Activated CD4-positive, alpha-beta memory T cell treated with anti-CD3 and anti-CD28 coated beads for 36 hours (primary cell): ENCODE measurements at regions of chr5 and their contacts with region 1.

Region 1: GRCh38 chr5:142713121-142713706 is 27.3 kb upstream of the FGF1 start:
- DNase-seq: peak; percentile 89
- H3K4me3 Mint-ChIP-seq: peak overlapping the region; percentile 67
- H3K27ac Mint-ChIP-seq: no peak overlapping the region
- H3K4me1 Mint-ChIP-seq: peaks cover 7% of the 10 kb centered on the region
- H3K27me3 Mint-ChIP-seq: peaks cover 2% of the 10 kb centered on the region

Region 2: GRCh38 chr5:142356716-142357473 is 356.3 kb before region 1 on chr5:
- CTCF ChIA-PET with region 1: no interaction called
- POLR2A ChIA-PET with region 1: no interaction called
- intact Hi-C with region 1: no loop called
- DNase-seq: peak; percentile 95
- H3K4me3 Mint-ChIP-seq: peak overlapping the region; percentile 71
- H3K27ac Mint-ChIP-seq: peak overlapping the region; percentile 91
- H3K4me1 Mint-ChIP-seq: peaks cover 38% of the 10 kb centered on the region
- H3K27me3 Mint-ChIP-seq: no peaks in the 10 kb centered on the region

Region 3: DNA sequence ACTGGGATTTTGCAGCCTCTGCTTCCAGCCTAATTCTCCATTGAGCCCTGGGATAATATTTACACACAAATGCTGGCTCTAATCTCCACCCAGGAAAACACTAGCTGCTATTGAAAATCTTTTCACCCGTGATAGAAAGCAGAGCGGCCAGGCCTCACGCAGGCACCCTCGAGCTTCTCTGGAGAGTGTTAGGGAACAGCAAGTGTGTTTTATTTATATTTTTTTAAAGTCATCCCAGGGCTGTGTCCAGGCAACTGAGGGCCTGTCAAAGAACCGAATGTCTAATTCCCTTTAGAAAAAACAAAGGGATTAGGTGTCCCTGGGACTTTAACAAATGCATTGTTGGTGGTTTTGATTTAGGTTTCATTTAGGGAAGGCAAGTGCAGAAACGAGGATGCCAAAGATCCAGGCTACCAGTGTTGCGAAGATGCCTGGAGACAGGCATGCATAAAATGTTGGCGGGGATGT is 337.2 kb before region 1 on chr5:
- CTCF ChIA-PET with region 1: no interaction called
- POLR2A ChIA-PET with region 1: no interaction called
- intact Hi-C with region 1: no loop called
- DNase-seq: no peak
- H3K4me3 Mint-ChIP-seq: no peak overlapping the region
- H3K27ac Mint-ChIP-seq: no peak overlapping the region
- H3K4me1 Mint-ChIP-seq: peaks cover 11% of the 10 kb centered on the region
- H3K27me3 Mint-ChIP-seq: no peaks in the 10 kb centered on the region

Region 4: GRCh38 chr5:142605611-142606010 is 107.6 kb before region 1 on chr5:
- CTCF ChIA-PET with region 1: interaction called, 13 read pairs
- POLR2A ChIA-PET with region 1: no interaction called
- intact Hi-C with region 1: loop called (anchors 5 kb)
- DNase-seq: no peak
- H3K4me3 Mint-ChIP-seq: no peak overlapping the region
- H3K27ac Mint-ChIP-seq: no peak overlapping the region
- H3K4me1 Mint-ChIP-seq: no peaks in the 10 kb centered on the region
- H3K27me3 Mint-ChIP-seq: peaks cover 10% of the 10 kb centered on the region

Region 5: GRCh38 chr5:142655339-142656267 is 57.6 kb before region 1 on chr5:
- CTCF ChIA-PET with region 1: interaction called, 28 read pairs
- POLR2A ChIA-PET with region 1: no interaction called
- intact Hi-C with region 1: no loop called
- DNase-seq: peak; percentile 82
- H3K4me3 Mint-ChIP-seq: no peak overlapping the region
- H3K27ac Mint-ChIP-seq: no peak overlapping the region
- H3K4me1 Mint-ChIP-seq: no peaks in the 10 kb centered on the region
- H3K27me3 Mint-ChIP-seq: peaks cover 6% of the 10 kb centered on the region

Region 6: DNA sequence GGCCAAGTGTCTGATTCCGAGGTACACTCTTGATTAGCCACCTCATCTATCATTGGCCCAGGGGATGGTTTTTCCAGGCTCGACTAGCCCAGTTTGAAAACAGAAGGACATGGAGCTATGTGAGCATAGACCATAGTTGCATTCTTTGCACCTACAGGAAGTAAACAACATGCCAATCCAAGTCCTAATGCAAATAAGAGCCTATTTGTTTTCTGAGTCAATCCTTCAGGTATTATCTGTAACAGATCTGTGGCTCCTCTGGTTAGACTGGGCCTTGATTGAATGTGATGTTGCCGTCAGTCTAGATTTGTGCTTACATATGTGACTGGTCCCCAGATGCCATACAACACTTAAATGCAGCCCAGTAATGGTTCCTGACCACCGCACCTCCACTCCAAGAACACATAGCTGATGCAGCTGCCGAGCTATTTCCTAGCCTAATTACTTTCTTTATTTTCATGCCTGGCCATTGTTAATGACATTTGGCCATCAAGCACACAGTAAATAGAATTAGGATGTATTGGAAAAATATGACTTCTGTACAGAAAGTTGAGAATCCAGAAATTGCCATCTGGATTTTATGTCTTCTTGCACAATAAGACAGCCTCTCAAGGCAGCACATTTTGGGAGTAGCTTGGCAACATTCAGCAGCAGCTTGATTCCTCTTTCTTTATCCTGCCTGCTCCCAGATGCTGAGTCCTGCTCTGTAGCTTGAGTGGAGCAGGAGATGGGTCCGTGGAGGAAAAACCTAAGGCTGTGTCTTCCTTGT is 27.4 kb after region 1 on chr5:
- CTCF ChIA-PET with region 1: interaction called, 16 read pairs
- POLR2A ChIA-PET with region 1: no interaction called
- intact Hi-C with region 1: no loop called
- DNase-seq: no peak
- H3K4me3 Mint-ChIP-seq: no peak overlapping the region
- H3K27ac Mint-ChIP-seq: no peak overlapping the region
- H3K4me1 Mint-ChIP-seq: peaks cover 7% of the 10 kb centered on the region
- H3K27me3 Mint-ChIP-seq: no peaks in the 10 kb centered on the region

Region 7: DNA sequence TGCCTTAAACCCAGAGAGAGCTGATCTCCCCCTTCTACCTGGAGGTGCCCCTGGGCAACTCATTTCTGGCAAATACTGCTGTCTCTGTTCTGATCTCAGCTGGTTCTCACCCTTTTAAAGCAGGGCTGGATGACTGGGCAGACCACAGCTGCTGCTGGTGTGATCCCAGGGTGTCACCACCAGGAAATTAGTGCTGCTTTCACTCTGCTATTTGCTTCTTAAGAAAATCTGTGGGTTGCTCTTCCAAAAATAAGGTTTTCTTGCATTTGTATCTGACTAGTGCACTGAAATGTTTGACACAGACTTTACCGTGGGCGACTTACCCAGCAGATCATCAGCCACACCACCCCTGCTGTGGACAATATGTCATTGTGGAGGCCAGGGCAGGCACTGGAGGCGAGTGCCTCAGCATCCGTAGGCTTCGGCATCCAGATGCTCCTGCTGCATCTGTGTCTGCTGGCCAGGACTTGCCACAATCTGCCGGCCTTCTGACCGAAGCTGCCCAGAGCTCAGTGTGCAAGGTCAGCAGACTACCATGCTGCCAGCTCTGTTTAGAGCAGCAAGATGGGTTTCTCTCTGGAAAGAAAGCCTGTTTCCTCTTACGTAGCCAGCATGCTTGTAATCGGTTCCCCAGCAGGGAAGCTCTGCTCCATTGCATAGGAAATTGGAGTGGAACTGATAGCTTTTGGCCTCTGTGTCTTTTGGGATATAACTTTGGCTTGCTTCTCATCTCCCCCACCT is 70.6 kb after region 1 on chr5:
- CTCF ChIA-PET with region 1: interaction called, 12 read pairs
- POLR2A ChIA-PET with region 1: no interaction called
- intact Hi-C with region 1: no loop called
- DNase-seq: peak; percentile 90
- H3K4me3 Mint-ChIP-seq: peak overlapping the region; percentile 34
- H3K27ac Mint-ChIP-seq: peak overlapping the region; percentile 85
- H3K4me1 Mint-ChIP-seq: peaks cover 56% of the 10 kb centered on the region
- H3K27me3 Mint-ChIP-seq: no peaks in the 10 kb centered on the region

Region 8: GRCh38 chr5:142881076-142881783 is 168.0 kb after region 1 on chr5:
- CTCF ChIA-PET with region 1: interaction called, 246 read pairs
- POLR2A ChIA-PET with region 1: no interaction called
- intact Hi-C with region 1: loop called (anchors 2 kb)
- DNase-seq: no peak
- H3K4me3 Mint-ChIP-seq: no peak overlapping the region
- H3K27ac Mint-ChIP-seq: no peak overlapping the region
- H3K4me1 Mint-ChIP-seq: no peaks in the 10 kb centered on the region
- H3K27me3 Mint-ChIP-seq: no peaks in the 10 kb centered on the region

Region 9: DNA sequence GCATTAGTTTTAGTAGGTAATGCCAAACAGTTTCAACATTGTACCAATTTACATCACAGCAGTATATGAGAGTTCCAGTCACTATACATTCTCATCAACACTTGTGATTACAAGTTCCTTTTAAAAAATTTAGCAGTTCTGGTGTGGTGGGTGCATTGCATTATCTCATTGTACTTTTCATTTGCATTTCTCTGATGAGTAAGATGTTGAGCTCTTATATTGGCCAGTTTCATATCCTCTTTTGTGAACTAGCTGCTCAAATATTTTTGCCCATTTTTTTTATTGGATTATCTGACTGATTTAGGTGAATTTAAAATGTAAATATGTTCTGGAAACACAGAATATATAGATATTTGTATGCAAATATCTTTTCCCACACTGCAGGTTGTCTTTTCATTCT is 851.2 kb after region 1 on chr5:
- CTCF ChIA-PET with region 1: no interaction called
- POLR2A ChIA-PET with region 1: no interaction called
- intact Hi-C with region 1: no loop called
- DNase-seq: no peak
- H3K4me3 Mint-ChIP-seq: no peak overlapping the region
- H3K27ac Mint-ChIP-seq: no peak overlapping the region
- H3K4me1 Mint-ChIP-seq: peaks cover 6% of the 10 kb centered on the region
- H3K27me3 Mint-ChIP-seq: no peaks in the 10 kb centered on the region